Thyroid gland (tissue), 4 donors: ENCODE measurements at regions of chr18 and their contacts with region 1.

Region 1: DNA sequence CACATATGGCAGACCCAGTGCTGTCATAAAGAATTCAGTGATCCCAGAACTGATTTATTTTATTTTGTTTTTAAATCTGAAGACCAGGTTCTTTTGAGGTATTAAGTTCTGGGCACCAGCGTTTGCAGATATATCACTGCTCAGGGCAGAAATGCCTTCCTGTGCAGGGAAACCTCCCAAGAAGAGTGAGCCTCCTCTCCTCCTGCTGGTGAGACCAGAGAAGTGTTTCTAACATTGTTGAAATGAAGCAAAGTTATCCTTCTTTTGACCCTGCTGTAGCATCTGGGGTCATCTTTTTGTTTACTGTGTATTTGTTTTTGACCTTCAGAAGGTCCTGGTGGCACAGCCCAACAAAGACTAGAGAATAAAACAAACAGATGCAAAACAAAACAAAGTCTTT is 94.0 kb downstream of the AQP4 start:
- DNase-seq: peak; percentile 35 to 44
- H3K4me3 ChIP-seq: no peak overlapping the region
- H3K27ac ChIP-seq: no peak overlapping the region
- H3K4me1 ChIP-seq: no peaks in the 10 kb centered on the region
- H3K27me3 ChIP-seq: no peaks in the 10 kb centered on the region
- CTCF ChIP-seq: peak; percentile 22 to 74 (median 64)
- POLR2A ChIP-seq: no peak

Region 2: DNA sequence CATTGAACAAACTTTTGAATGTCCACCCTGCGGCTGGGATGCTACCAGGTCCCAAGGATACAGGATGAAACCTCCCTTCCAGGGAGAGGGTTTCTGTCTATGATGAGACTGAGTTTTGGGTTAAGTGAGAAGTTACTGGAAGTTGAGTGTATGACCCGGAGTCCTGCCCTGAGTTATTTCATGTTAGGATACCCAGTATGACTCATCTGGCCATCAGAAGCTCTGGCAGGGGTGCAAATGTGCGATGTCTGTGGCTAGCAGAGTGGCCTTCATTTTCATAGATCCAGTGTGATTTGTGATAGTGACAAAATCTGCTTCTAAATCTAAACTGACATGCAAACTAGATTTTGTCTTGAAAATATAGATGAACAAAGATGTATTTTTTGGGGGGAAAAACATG is 278.5 kb before region 1 on chr18:
- intact Hi-C with region 1: no loop called
- DNase-seq: no peak
- H3K4me3 ChIP-seq: no peak overlapping the region
- H3K27ac ChIP-seq: no peak overlapping the region
- H3K4me1 ChIP-seq: no peaks in the 10 kb centered on the region
- H3K27me3 ChIP-seq: no peaks in the 10 kb centered on the region
- CTCF ChIP-seq: no peak
- POLR2A ChIP-seq: no peak

Region 3: GRCh38 chr18:26584745-26585144 is 186.8 kb before region 1 on chr18:
- intact Hi-C with region 1: no loop called
- DNase-seq: no peak
- H3K4me3 ChIP-seq: no peak overlapping the region
- H3K27ac ChIP-seq: no peak overlapping the region
- H3K4me1 ChIP-seq: no peaks in the 10 kb centered on the region
- H3K27me3 ChIP-seq: no peaks in the 10 kb centered on the region
- CTCF ChIP-seq: no peak
- POLR2A ChIP-seq: no peak

Region 4: DNA sequence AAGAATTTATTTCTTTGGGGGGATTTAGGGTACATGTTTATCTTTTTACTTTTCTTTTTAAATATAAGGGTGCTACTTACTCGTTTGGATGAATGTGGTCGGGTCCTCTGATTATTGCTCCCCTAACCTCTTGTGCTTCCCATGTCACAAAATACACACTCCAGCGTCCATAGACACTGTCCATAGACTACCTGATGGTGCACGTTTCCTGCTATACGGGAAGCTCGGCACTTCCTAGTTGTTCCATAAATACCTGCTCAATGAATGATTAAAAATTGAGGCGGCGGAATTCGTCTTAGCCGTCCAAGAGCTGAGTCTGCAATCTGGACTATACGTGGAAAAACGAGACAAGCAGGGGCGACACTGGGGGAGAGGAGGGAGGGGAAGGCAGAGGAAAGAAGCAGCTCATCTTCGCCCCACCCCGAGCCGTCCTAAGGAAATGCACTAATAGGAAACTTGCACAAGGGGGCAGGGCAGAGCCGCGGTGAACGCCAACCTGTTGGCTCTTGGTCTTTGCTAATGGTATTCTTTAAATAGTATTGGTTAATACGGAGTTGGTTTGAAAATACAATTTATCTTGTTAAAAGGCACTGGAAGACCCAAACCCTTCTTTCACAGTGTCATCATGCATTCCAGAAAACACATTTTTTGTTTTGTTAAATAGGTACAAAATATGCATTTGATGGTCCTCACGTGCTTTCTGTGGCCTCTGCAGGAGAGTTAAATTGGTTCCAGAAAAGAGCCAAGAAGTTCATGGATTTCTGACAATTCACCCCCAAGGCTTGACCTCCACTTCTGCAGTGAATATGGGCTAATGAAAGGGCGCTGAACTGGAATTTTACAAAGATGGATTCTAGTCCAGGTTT is 150.1 kb before region 1 on chr18:
- intact Hi-C with region 1: loop called (anchors 5 kb)
- DNase-seq: peak; percentile 48 to 65
- H3K4me3 ChIP-seq: no peak overlapping the region
- H3K27ac ChIP-seq: no peak overlapping the region
- H3K4me1 ChIP-seq: no peaks in the 10 kb centered on the region
- H3K27me3 ChIP-seq: no peaks in the 10 kb centered on the region
- CTCF ChIP-seq: peak; percentile 48 to 74 (median 68)
- POLR2A ChIP-seq: no peak

Region 5: GRCh38 chr18:26719900-26720299 is 51.6 kb before region 1 on chr18:
- intact Hi-C with region 1: no loop called
- DNase-seq: no peak
- H3K4me3 ChIP-seq: no peak overlapping the region
- H3K27ac ChIP-seq: peak overlapping the region in 1 of 3 donors; percentile 8
- H3K4me1 ChIP-seq: peaks cover 0 to 3% of the 10 kb centered on the region in 2 donors
- H3K27me3 ChIP-seq: no peaks in the 10 kb centered on the region
- CTCF ChIP-seq: no peak
- POLR2A ChIP-seq: no peak

Region 6: GRCh38 chr18:26832302-26832701 is 60.8 kb after region 1 on chr18:
- intact Hi-C with region 1: no loop called
- DNase-seq: no peak
- H3K4me3 ChIP-seq: no peak overlapping the region
- H3K27ac ChIP-seq: no peak overlapping the region
- H3K4me1 ChIP-seq: no peaks in the 10 kb centered on the region
- H3K27me3 ChIP-seq: no peaks in the 10 kb centered on the region
- CTCF ChIP-seq: no peak
- POLR2A ChIP-seq: no peak